Head of caudate nucleus (tissue), 42 donors: ENCODE measurements at regions of chr17 and their contacts with region 1.

Region 1: DNA sequence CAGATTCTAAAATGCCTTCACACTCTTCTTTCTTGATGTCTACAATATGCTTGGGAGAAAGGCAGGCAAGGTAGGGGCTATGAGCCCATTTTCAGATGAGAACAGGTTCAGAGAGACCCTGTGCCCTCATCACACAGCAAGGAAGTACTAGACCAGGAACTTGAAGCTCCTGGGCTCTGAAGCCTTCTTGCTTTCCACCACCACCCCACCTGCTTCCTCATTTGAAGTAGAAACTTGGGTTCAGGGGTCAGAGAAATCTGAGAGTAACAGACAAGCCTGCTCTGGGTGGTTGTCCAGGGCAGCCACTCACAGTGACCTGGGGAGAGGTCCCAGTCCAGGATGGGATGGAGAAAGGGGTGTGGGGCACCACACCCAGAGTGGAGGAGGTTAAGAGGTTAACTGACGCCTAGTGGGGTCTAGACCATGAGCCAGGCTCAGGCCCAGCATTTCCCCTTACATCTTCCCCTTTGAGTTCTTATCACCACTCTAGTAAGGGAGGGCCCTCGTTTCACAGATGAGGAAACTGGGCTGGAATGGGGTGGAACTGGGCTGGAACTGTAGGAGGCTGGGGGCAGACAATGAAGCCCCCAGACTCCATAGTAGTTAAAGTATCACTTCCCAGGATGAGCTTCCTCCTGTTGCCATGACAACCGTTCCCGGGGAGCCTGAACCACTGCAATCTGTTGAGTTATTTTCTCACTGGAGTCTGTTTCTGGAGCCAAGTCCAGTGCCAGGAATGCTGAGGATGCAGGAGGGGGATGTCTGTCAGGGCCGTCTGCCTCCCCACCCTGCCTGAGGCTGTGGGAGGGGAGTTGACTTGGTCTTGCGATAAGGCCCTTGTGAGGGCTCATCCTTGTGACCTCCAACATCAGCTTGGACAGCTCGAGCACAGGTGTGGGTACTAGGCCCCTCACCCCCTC is 16.2 kb upstream of the PHF12 start:
- DNase-seq: no peak

Region 2: DNA sequence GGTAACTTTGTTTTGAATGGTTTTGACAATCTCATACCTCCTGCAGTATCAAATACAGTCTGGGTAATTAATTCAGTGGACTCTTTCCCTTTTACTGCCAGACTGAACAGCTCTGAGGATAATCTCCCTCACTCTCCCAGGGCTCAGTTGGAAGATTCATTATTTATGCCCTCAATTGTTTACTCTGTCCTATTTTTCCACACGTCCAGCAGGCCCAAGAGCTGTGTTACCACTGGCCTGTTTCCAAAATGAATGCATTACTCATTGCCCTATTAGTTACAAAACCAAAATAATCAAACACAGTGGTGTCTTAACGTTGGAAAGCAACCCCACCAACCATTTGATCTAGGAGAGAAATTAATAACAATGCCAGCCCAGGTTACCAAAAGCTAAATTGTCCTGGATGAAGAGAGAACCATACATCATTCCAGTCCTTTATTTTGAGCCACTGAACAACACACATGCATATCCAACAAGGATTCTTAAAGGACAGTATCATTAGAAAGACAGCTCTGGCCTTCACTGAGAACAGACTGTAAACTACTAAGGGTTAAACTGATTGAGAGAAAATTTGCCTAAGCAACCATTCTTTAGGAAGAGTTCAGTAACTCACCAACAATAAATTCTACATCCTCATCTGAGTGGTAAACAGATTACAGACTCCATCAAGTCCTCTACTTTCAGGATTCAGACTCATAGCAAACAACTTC is 159.4 kb before region 1 on chr17:
- intact Hi-C with region 1: no loop called
- DNase-seq: peak in 5 of 42 donors; percentile 7 to 53 (median 23)

Region 3: GRCh38 chr17:29111816-29112499 is 144.5 kb after region 1 on chr17:
- intact Hi-C with region 1: loop called (anchors 2 kb)
- DNase-seq: peak; percentile 57 to 89 (median 79)

Region 4: GRCh38 chr17:29119265-29119664 is 151.8 kb after region 1 on chr17:
- intact Hi-C with region 1: loop called (anchors 2 kb)
- DNase-seq: no peak

Region 5: DNA sequence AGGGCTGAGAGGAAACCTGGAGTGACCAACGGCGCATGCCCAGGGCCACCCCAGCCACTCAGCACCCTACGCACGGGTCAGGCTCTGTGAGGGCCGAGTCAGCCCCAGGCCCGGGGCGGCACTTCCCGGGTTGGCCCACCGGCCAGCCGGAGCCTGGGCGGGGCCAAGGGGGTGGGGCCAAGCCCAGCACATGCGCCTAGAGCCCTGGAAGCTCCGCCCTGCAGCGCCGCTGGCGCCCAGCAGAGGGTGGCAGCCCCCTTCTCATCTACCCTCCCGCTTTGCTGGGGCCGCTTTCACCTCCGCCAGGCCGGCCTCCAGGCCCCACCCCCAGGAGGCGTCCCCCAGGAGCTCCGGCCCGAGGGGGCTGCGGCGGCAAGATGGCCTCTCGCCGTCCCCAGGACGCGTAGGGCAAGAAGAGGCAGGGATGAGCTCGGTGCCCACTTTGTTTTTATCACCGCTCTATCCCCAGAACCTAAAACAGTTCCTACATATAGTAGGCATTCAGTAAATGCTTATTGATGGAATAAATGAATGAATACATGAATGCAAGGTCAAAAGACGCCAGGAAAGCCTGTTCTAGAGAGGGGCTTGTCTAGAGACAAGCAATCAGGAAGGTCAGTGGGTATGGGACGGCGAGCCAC is 181.4 kb after region 1 on chr17:
- intact Hi-C with region 1: no loop called
- DNase-seq: peak; percentile 85 to 97 (median 93)